Activated CD4-positive, alpha-beta T cell treated with anti-CD3 and anti-CD28 coated beads for 36 hours (primary cell): ENCODE measurements at regions of chr3 and their contacts with region 1.

Region 1: GRCh38 chr3:49171119-49171774 is at the start of gene KLHDC8B:
- DNase-seq: peak; percentile 92
- ATAC-seq: peak; percentile 87
- H3K4me3 Mint-ChIP-seq: peak within 1 kb of the TSS; percentile 78
- H3K27ac Mint-ChIP-seq: peak within 1 kb of the TSS; percentile 76
- H3K4me1 Mint-ChIP-seq: peaks cover 17% of the 10 kb centered on the region
- H3K27me3 Mint-ChIP-seq: no peaks in the 10 kb centered on the region
- total RNA-seq, gene KLHDC8B: 1.2 to 3.1 TPM

Region 2: DNA sequence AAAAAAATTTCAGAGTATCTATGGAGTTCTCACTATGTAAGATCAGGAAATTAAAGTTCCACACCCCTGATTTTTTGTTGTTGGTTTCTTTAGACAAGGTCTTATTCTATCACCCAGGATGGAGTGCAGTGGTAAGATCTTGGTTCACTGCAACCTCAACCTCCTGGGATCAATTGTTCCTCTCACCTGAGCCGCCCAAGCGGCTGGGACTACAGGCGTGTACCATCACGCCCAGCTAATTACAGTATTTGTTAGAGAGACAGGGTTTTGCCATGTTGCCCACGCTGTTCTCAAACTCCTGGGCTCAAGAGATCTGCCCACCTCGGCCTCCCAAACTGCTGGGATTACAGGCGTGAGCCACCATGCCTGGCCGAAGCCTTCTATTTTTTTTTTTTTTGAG is 89.8 kb before region 1 on chr3:
- CTCF ChIA-PET with region 1: no interaction called
- POLR2A ChIA-PET with region 1: interaction called, 10 read pairs
- intact Hi-C with region 1: no loop called
- DNase-seq: no peak
- ATAC-seq: no peak
- H3K4me3 Mint-ChIP-seq: no peak overlapping the region
- H3K27ac Mint-ChIP-seq: no peak overlapping the region
- H3K4me1 Mint-ChIP-seq: peaks cover 11% of the 10 kb centered on the region
- H3K27me3 Mint-ChIP-seq: no peaks in the 10 kb centered on the region

Region 3: DNA sequence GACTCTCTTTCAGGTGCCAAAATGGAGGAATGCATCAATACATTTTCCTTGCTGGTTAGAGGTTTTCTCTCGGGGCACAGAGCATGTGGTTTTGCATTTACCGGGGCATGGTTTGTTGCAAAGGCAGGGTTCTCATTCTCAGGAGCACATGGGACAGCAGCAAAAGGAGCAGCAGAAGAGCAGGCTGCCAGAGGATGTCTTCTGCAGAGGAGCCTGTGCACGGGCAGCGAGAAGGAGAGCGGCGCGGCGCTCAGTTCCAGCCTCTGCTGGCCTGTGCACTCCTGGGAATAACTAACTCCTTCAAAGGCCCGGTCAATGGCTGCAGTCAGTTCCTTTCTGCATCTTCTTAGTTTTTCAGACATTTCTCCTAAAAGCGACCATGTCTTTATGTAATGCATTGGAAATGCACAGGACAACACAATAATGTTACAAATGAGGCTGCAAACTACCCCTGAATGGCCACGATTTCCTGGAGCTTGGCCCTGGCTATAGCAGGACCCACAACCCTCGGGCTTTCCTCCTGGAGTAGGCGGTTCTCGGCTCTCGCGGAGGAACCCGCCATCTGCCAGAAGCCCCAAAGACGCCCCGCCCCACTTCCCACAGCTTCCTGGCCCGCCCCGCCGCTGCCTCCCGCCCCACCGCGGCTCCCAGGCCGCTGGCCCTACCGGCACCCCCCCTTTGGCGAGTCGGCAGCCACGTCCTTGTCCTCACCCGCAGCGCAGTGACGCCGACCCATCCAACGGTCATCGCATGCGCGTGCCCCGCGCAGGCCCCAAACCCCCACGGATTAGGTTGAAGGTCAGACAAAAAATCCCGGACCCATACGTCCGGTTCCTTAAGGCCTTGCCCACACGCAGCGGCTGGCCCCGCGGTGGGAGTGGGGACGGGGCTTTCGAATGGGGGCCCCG is 105.5 kb after region 1 on chr3 and contains the start of gene C3orf62:
- CTCF ChIA-PET with region 1: no interaction called
- POLR2A ChIA-PET with region 1: no interaction called
- intact Hi-C with region 1: loop called in 1 of 2 experiments (anchors 1 kb)
- DNase-seq: peak; percentile 88
- ATAC-seq: peak; percentile 87
- H3K4me3 Mint-ChIP-seq: peak within 1 kb of the TSS; percentile 77
- H3K27ac Mint-ChIP-seq: peak within 1 kb of the TSS; percentile 87
- H3K4me1 Mint-ChIP-seq: peaks cover 30% of the 10 kb centered on the region
- H3K27me3 Mint-ChIP-seq: no peaks in the 10 kb centered on the region
- total RNA-seq, gene C3orf62: 3.7 to 3.9 TPM

Region 4: GRCh38 chr3:49553692-49554632 is 382.7 kb after region 1 on chr3 and contains the start of gene BSN:
- CTCF ChIA-PET with region 1: no interaction called
- POLR2A ChIA-PET with region 1: no interaction called
- intact Hi-C with region 1: no loop called
- DNase-seq: peak; percentile 95
- ATAC-seq: peak; percentile 92
- H3K4me3 Mint-ChIP-seq: peak within 1 kb of the TSS; percentile 72
- H3K27ac Mint-ChIP-seq: peak within 1 kb of the TSS; percentile 24
- H3K4me1 Mint-ChIP-seq: peaks cover 11% of the 10 kb centered on the region
- H3K27me3 Mint-ChIP-seq: peaks cover 34% of the 10 kb centered on the region
- total RNA-seq, gene BSN: 0.09 to 0.11 TPM